Right ventricle myocardium inferior (tissue), 1 donor: ENCODE measurements at regions of chr7 and their contacts with region 1.

Region 1: DNA sequence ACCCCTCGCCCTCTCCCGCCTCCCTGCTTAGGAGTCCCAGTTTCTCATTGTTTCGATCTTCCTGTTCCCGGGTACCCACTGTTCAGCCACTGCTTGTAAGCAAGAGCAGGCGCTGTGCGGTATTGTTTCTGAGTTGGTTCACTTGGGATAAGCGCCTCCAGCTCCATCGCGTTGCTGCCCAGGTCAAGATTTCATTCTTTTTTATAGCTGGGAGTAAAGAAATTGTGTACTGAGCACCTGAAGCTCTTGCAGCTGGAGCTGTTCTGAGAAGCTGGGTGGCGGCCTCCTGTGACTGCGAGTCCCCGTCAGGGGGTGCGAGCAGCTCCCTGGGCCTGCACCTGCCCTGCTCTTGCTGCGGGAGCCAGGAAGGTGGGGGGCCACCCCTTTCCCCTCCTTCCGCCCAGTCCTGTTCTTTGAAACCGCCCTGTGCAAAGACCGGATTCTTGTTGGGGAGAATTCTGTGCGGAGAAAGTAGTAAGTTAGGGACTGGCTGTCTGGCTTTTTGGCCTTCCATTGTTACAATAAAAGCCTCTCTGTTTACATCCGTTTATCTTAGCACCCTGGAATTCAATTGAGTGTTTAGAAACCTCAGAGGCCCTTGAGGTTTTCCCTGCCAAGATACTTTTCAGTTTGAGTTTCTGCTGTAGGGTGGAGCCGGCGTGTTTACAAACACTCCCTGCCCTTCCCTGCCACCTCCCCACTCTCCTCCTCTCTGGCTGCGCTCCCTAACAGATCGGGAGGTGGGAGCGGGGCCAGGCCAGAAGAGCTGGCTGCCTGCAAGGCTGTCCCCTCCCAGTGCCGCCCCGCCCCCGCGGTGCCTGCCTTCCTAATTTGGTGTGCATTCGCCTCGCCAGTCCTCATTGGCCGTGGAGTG is 30.8 kb upstream of the AP5Z1 start:
- DNase-seq: peak; percentile 99
- ATAC-seq: peak; percentile 97

Region 2: DNA sequence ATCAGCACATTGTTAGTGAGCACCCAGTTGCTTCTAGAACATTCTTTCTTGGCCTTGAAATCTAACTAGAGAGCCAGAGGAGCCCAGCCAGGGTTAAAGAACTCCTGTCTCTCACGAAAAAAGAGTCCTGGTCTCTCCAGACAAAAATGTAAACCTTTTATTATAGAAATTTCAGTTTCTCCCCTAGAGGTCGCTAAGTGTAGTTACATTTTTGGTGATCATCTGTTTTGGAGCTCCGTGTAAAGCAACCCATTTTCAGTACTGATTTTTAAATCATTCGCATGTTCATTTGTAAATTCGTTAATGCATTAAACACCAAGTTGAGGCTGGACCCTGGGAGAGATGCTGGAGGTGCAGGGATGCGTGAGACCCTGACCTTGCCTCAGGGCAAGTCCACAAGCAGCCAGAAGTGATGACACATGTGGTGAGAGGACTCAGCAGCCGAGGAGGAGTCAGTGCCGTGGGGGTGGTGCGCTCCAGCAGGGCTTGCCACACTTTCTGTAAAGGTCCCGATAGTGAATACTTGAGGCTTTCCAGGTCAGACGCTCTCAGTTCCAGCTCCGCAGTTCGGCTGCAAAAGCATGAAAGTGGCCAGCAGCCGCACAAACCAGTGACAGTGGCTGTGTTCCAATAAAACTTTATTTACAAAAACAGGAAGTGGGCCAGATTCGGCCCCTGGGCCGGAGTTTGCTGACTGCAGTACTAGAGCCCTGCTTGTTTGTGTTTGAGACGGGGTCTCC is 641.1 kb before region 1 on chr7:
- intact Hi-C with region 1: no loop called
- DNase-seq: no peak
- ATAC-seq: no peak

Region 3: DNA sequence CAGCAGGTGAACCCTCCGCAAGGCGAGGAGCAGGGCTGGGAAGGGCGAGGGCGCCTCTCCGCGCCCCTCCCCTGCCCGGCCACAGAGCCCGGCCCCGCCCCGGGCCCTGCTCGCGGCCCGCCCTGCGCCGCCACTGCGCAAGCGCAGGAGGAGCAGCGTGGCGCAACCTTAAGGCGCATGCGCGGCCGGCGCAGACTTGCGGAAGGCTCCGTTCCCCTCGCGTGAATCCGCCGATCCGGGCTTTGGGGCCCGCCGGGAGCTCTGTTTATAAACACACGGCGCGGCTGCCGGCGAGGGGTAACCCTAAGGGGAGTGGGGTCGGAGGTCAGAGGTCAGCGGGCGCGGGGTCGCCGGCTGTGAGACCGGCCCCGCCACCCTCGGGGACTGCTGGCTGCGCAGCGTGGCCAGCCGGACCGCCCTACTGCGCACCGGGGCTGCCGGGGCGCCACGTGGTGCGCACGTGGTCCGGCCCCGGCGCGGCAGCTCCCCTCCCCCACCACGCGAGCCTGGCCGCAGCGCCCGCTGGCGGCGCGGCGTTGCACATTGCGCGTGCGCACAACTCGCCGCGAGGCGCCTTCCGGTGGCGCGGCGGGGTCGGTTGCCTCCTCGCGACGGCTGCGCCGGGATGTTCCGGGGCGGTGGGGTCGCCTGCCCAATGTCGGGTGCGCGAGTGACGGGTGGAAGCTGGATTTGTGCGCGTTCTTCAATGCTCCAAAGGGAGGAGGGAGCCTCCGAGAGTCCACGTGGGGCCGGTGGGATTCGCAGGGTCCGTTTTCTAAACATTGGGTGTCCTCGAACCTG is 102.8 kb before region 1 on chr7:
- intact Hi-C with region 1: loop called (anchors 5 kb)
- DNase-seq: peak; percentile 98
- ATAC-seq: peak; percentile 98

Region 4: GRCh38 chr7:4681886-4682620 is 62.6 kb before region 1 on chr7 and contains the start of gene FOXK1:
- intact Hi-C with region 1: loop called (anchors 2 kb)
- DNase-seq: peak; percentile 90
- ATAC-seq: peak; percentile 89
- total RNA-seq, gene FOXK1: 16.8 TPM

Region 5: GRCh38 chr7:4693749-4694148 is 50.9 kb before region 1 on chr7:
- intact Hi-C with region 1: loop called (anchors 2 kb)
- DNase-seq: no peak
- ATAC-seq: no peak

Region 6: GRCh38 chr7:4715410-4715776 is 29.2 kb before region 1 on chr7:
- intact Hi-C with region 1: loop called (anchors 1 kb)
- DNase-seq: peak; percentile 82
- ATAC-seq: peak; percentile 96